IMR-90 (cell line): ENCODE measurements at regions of chr5 and their contacts with region 1.

Region 1: DNA sequence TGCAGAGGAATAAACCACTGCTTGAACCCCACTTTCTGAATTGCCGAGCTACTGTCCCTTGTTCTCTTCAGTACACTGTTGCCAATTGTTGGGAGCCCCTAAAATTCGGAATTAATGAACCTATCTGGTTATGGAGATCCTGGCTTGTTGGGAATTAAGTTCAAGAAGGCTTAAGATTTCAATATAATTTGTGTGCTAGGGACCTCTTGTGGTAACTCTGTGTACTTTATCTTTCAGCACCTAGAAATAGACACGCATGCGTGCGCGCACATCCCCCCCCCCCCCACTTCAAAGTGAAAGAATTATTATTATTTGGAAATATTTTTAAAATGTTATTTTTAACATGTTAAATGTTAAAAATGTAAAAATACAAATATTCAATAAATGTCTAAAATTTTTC is 53.3 kb upstream of the FAM169A start:
- DNase-seq: peak; percentile 70
- ATAC-seq: peak; percentile 88
- H3K4me3 ChIP-seq: no peak overlapping the region
- H3K27ac ChIP-seq: no peak overlapping the region
- H3K4me1 ChIP-seq: no peaks in the 10 kb centered on the region
- H3K27me3 ChIP-seq: no peaks in the 10 kb centered on the region
- CTCF ChIP-seq: peak; percentile 70
- POLR2A ChIP-seq: no peak
- RAD21 ChIP-seq: peak; percentile 67

Region 2: GRCh38 chr5:73902327-73903051 is 1017.0 kb before region 1 on chr5:
- CTCF ChIA-PET with region 1: no interaction called
- POLR2A ChIA-PET with region 1: no interaction called
- dilution Hi-C with region 1: no loop called
- in situ Hi-C with region 1: loop called (anchors 25 kb)
- intact Hi-C with region 1: loop called (anchors 10 kb)
- DNase-seq: peak; percentile 77
- ATAC-seq: peak; percentile 63
- H3K4me3 ChIP-seq: no peak overlapping the region
- H3K27ac ChIP-seq: no peak overlapping the region
- H3K4me1 ChIP-seq: peaks cover 4% of the 10 kb centered on the region
- H3K27me3 ChIP-seq: no peaks in the 10 kb centered on the region
- CTCF ChIP-seq: peak; percentile 80
- POLR2A ChIP-seq: no peak
- RAD21 ChIP-seq: peak; percentile 81

Region 3: GRCh38 chr5:74567461-74567860 is 352.0 kb before region 1 on chr5:
- CTCF ChIA-PET with region 1: no interaction called
- POLR2A ChIA-PET with region 1: no interaction called
- dilution Hi-C with region 1: no loop called
- in situ Hi-C with region 1: no loop called
- intact Hi-C with region 1: no loop called
- DNase-seq: no peak
- ATAC-seq: no peak
- H3K4me3 ChIP-seq: no peak overlapping the region
- H3K27ac ChIP-seq: no peak overlapping the region
- H3K4me1 ChIP-seq: no peaks in the 10 kb centered on the region
- H3K27me3 ChIP-seq: no peaks in the 10 kb centered on the region; the same call in 1 of the 2 replicates
- CTCF ChIP-seq: no peak
- POLR2A ChIP-seq: no peak
- RAD21 ChIP-seq: no peak

Region 4: DNA sequence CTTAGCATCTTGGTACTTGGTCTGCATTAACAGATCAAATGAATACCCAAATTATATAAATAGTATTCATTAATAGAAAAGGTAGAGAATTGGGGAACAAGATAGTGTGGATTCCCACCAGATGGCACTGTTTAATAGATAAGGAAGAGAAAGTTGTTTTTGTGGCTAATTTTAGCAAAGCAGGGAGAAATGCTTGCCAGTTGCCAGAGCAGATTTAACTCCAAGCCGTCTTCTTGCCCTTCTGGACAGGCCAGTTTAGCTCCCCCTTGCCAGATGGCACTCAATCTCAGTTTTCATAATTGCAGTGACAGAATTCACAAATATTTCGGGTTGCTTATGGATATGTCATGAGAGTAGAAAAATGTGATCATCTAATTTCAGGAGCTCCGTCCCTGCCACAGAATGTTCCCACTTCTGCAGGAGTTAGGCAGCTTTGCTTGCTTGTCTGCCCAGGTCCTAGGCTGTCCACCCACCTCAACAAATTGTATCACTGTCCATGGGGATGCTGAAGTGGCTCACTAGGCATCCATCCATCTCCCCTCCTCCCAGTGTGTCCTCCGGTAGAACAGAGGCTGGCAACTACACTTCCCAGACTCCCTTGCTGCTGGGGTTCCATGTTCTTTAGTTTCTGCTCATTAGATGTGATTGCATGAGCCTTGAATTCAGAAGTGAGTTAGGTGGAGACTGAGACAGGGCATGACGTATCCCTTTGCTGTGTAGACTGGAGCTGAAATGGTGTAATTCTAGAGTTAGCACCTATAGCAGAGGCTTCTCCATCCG is 246.3 kb before region 1 on chr5:
- CTCF ChIA-PET with region 1: no interaction called
- POLR2A ChIA-PET with region 1: no interaction called
- dilution Hi-C with region 1: no loop called
- in situ Hi-C with region 1: loop called (anchors 5 kb)
- intact Hi-C with region 1: loop called (anchors 1 kb)
- DNase-seq: peak; percentile 67
- ATAC-seq: peak; percentile 78
- H3K4me3 ChIP-seq: no peak overlapping the region
- H3K27ac ChIP-seq: no peak overlapping the region
- H3K4me1 ChIP-seq: peaks cover 3% of the 10 kb centered on the region
- H3K27me3 ChIP-seq: peaks cover 3% of the 10 kb centered on the region; the same call in 1 of the 2 replicates
- CTCF ChIP-seq: peak; percentile 71
- POLR2A ChIP-seq: no peak
- RAD21 ChIP-seq: peak; percentile 72

Region 5: GRCh38 chr5:74766849-74767578 is 152.5 kb before region 1 on chr5 and contains the starts of genes GFM2 and NSA2:
- CTCF ChIA-PET with region 1: no interaction called
- POLR2A ChIA-PET with region 1: no interaction called
- dilution Hi-C with region 1: no loop called
- in situ Hi-C with region 1: loop called (anchors 10 kb)
- intact Hi-C with region 1: loop called (anchors 1 kb)
- DNase-seq: peak; percentile 94
- ATAC-seq: peak; percentile 94
- H3K4me3 ChIP-seq: peak within 1 kb of the TSS; percentile 82
- H3K27ac ChIP-seq: peak within 1 kb of the TSS; percentile 88
- H3K4me1 ChIP-seq: peaks cover 7% of the 10 kb centered on the region
- H3K27me3 ChIP-seq: no peaks in the 10 kb centered on the region
- CTCF ChIP-seq: no peak
- POLR2A ChIP-seq: peak; percentile 61
- RAD21 ChIP-seq: no peak
- total RNA-seq, gene GFM2: 45.7 and 61.4 TPM in 2 replicates
- total RNA-seq, gene NSA2: 5.4 and 25.6 TPM in 2 replicates

Region 6: GRCh38 chr5:74864823-74865222 is 54.7 kb before region 1 on chr5:
- CTCF ChIA-PET with region 1: no interaction called
- POLR2A ChIA-PET with region 1: no interaction called
- dilution Hi-C with region 1: no loop called
- in situ Hi-C with region 1: no loop called
- intact Hi-C with region 1: loop called (anchors 5 kb)
- DNase-seq: no peak
- ATAC-seq: no peak
- H3K4me3 ChIP-seq: no peak overlapping the region
- H3K27ac ChIP-seq: no peak overlapping the region
- H3K4me1 ChIP-seq: no peaks in the 10 kb centered on the region
- H3K27me3 ChIP-seq: peaks cover 49% of the 10 kb centered on the region
- CTCF ChIP-seq: no peak
- POLR2A ChIP-seq: no peak
- RAD21 ChIP-seq: no peak